Gastrocnemius medialis (tissue), 4 donors: ENCODE measurements at regions of chrX and their contacts with region 1.

Region 1: GRCh38 chrX:1481636-1482529 is 29.2 kb upstream of the ASMTL start:
- DNase-seq: peak; percentile 31 to 53
- ATAC-seq: peak; percentile 75 to 77
- H3K4me3 ChIP-seq: no peak overlapping the region
- H3K27ac ChIP-seq: peak overlapping the region; percentile 48 to 70 (median 60)
- H3K4me1 ChIP-seq: no peaks in the 10 kb centered on the region
- H3K27me3 ChIP-seq: no peaks in the 10 kb centered on the region
- CTCF ChIP-seq: no peak
- POLR2A ChIP-seq: peak; percentile 6 to 27

Region 2: GRCh38 chrX:1537035-1537715 is 55.3 kb after region 1 on chrX and contains the start of gene P2RY8:
- in situ Hi-C with region 1: no loop called
- intact Hi-C with region 1: loop called (anchors 10 kb)
- DNase-seq: peak; percentile 38
- ATAC-seq: peak; percentile 21 to 70
- H3K4me3 ChIP-seq: peak within 1 kb of the TSS; percentile 35 to 51 (median 42)
- H3K27ac ChIP-seq: peak within 1 kb of the TSS in 3 of 4 donors; percentile 45 to 63 (median 60)
- H3K4me1 ChIP-seq: no peaks in the 10 kb centered on the region
- H3K27me3 ChIP-seq: no peaks in the 10 kb centered on the region
- CTCF ChIP-seq: no peak
- POLR2A ChIP-seq: no peak
- total RNA-seq, gene P2RY8: 0.36 to 1.1 (median 0.62) TPM